ENCODE measurements at regions of chr12 and their contacts with region 1.

Region 1: DNA sequence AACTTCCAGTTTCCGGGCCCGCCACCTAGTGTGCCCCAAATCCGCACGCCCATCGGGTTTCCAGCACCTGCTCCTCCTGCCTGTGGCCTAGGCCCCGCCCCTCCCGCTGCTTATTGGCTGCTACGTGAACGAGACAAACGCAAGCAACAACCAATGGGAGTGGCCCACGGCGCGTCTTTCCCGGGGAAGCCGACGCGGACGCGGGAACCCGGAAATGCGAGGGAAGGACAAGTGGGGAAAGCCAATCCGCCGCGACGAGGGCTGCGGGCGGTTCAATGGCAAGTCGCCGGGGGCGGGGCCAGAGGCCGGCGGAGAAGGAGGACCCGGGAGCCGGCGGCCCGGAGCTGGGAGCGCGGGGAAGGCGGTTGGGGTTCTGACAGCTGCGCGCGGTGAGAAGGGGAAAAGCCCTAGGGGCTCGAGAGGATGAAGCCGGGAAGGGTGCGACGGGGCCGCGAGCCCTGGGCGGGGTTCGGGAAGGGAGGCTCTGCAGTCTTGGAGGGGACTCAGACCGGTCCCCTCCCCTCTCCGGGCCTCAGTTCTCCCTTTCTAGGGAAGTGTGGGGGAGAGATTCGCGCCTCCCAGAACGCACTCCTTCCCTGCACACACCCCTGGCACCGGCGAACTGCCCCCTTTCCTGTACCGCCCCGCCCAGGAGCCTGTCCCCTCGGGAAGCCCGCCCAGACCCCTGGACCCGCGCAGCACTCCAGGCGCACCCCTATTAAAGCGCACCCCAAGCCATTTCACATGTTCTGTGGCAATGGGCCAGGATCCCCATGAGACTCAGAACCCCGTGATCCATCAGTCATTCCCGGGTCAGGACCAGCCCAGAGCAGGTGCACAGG is at the start of gene FICD:
- DNase-seq: peak; percentile 99
- H3K4me3 Mint-ChIP-seq: peak within 1 kb of the TSS; percentile 90
- H3K27ac Mint-ChIP-seq: peak within 1 kb of the TSS; percentile 57
- H3K4me1 Mint-ChIP-seq: peaks cover 22% of the 10 kb centered on the region
- H3K27me3 Mint-ChIP-seq: no peaks in the 10 kb centered on the region
- CTCF ChIP-seq: no peak
- total RNA-seq, gene FICD: 14.3 and 15.2 TPM in 2 replicates

Region 2: DNA sequence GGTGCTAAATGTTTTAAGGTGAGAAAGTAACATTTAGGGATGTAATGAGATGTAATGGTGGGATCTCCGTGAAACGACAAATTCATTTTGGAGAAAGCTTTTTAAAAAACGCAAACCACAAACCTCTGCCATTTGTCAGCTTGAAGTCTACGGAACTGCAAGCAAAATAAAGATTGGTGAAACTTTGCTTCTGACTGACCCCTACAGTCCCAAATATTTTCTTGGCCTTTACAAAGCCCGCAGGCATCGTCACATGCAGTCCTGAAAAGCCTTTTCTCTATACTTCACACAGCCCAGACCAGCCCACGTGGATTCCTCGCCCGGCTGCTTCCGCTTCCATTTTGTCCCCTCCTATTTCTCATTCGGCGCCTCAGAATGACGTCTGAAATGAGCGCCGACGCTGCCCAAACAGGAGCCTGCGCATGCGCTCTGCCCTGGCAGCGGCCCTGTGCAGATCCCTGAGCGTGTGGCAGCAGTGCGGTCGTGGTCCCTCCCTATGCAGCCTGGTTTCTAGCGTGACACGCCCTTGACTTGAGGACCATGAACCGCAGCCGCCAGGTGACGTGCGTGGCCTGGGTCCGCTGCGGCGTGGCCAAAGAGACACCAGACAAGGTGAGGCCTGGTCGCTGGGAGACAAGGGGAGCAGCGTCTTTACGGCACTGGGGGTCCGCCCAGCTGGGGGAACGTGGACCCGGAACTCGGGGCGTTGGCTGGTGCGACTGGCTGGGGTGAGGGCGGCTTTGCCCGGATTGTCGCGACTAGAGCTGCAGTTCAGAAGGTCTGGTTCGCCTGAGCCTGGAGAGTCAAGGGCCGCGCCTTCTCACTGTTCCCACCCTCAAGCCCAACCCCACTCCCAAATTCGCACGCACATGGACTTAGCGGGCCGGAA is 829.6 kb before region 1 on chr12 and contains the start of gene PWP1:
- CTCF ChIA-PET with region 1: no interaction called
- POLR2A ChIA-PET with region 1: no interaction called
- intact Hi-C with region 1: loop called (anchors 10 kb)
- DNase-seq: peak; percentile 94
- H3K4me3 Mint-ChIP-seq: peak within 1 kb of the TSS; percentile 90
- H3K27ac Mint-ChIP-seq: peak within 1 kb of the TSS; percentile 98
- H3K4me1 Mint-ChIP-seq: peaks cover 18% of the 10 kb centered on the region
- H3K27me3 Mint-ChIP-seq: no peaks in the 10 kb centered on the region
- CTCF ChIP-seq: no peak
- total RNA-seq, gene PWP1: 41.5 and 49.7 TPM in 2 replicates

Region 3: GRCh38 chr12:107992870-107993451 is 522.2 kb before region 1 on chr12:
- CTCF ChIA-PET with region 1: interaction called, 59 read pairs
- POLR2A ChIA-PET with region 1: no interaction called
- intact Hi-C with region 1: loop called (anchors 1 kb)
- DNase-seq: peak; percentile 55
- H3K4me3 Mint-ChIP-seq: no peak overlapping the region
- H3K27ac Mint-ChIP-seq: no peak overlapping the region
- H3K4me1 Mint-ChIP-seq: no peaks in the 10 kb centered on the region
- H3K27me3 Mint-ChIP-seq: peaks cover 12% of the 10 kb centered on the region
- CTCF ChIP-seq: peak; percentile 39

Region 4: DNA sequence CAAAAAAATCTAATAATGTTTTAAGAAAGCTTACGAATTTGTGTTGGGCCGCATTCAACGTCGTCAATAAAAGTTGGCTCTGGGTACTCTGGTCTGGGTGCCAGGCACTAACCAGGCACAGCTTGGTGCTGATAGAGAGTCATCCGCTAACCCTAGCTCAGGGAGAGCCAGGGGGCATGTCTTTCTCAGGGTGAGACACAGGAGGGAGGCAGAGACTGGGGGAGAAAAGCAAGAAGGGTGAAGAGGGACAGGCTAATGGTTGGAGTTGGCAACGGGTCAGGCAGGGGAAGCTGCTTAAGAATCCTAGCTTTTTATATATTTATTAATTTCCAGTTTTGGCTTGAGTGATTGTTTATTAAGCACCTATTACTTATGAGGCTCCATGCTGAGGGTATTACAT is 281.0 kb before region 1 on chr12:
- CTCF ChIA-PET with region 1: interaction called, 3 read pairs
- POLR2A ChIA-PET with region 1: no interaction called
- intact Hi-C with region 1: loop called (anchors 5 kb)
- DNase-seq: peak; percentile 14
- H3K4me3 Mint-ChIP-seq: no peak overlapping the region
- H3K27ac Mint-ChIP-seq: no peak overlapping the region
- H3K4me1 Mint-ChIP-seq: no peaks in the 10 kb centered on the region
- H3K27me3 Mint-ChIP-seq: peaks cover 36% of the 10 kb centered on the region
- CTCF ChIP-seq: no peak

Region 5: GRCh38 chr12:108337235-108338223 is 177.7 kb before region 1 on chr12:
- CTCF ChIA-PET with region 1: interaction called, 4 read pairs
- POLR2A ChIA-PET with region 1: no interaction called
- intact Hi-C with region 1: loop called (anchors 5 kb)
- DNase-seq: peak; percentile 55
- H3K4me3 Mint-ChIP-seq: no peak overlapping the region
- H3K27ac Mint-ChIP-seq: no peak overlapping the region
- H3K4me1 Mint-ChIP-seq: peaks cover 18% of the 10 kb centered on the region
- H3K27me3 Mint-ChIP-seq: no peaks in the 10 kb centered on the region
- CTCF ChIP-seq: peak; percentile 51

Region 6: GRCh38 chr12:108618079-108618952 is 103.1 kb after region 1 on chr12:
- CTCF ChIA-PET with region 1: interaction called, 4 read pairs
- POLR2A ChIA-PET with region 1: no interaction called
- intact Hi-C with region 1: loop called (anchors 5 kb)
- DNase-seq: peak; percentile 85
- H3K4me3 Mint-ChIP-seq: no peak overlapping the region
- H3K27ac Mint-ChIP-seq: no peak overlapping the region
- H3K4me1 Mint-ChIP-seq: no peaks in the 10 kb centered on the region
- H3K27me3 Mint-ChIP-seq: no peaks in the 10 kb centered on the region
- CTCF ChIP-seq: peak; percentile 94